AG04450 (cell line): ENCODE measurements at regions of chr7 and their contacts with region 1.

Region 1: DNA sequence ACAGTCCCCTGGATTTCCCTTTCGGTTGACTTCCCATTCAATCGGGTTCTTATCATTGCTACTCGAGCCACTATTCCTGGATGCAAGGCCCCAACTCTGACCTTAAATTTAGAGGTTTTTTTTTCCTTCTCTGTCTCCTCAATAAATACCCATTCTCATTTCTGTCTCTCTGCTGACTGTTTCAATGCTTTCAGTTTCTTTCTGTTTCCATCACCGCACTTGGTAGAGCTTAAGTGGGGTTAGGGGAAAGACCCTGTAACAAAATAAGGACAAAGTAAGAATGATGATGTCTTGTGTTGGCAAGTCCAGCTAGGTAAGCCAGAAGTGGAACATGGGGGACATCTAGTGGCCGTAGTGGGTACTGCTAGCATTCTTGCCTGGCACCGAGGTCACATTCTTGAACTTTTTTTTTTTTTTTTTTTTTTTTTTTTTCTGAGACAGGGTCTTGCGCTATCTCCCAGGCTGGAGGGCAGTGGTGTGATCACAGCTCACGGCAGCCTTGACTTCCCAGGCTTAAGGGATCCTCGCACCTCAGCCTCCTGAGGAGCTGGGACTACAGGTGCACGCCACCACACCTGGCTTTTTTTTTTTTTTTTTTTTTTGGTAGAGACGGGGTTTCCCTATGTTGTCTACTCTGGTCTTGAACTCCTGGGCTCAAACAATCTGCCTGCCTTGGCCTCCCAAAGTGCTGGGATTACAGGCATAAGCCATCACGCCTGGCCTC is 40.3 kb downstream of the ZC3HC1 start:
- DNase-seq: peak; percentile 80
- H3K4me3 ChIP-seq: no peak overlapping the region
- H3K27ac ChIP-seq: peak overlapping the region; percentile 88
- H3K27me3 ChIP-seq: no peaks in the 10 kb centered on the region
- CTCF ChIP-seq: peak; percentile 96

Region 2: GRCh38 chr7:129514683-129515082 is 496.2 kb before region 1 on chr7:
- CTCF ChIA-PET with region 1: no interaction called
- POLR2A ChIA-PET with region 1: no interaction called
- DNase-seq: no peak
- H3K4me3 ChIP-seq: no peak overlapping the region
- H3K27ac ChIP-seq: no peak overlapping the region
- H3K27me3 ChIP-seq: peaks cover 18% of the 10 kb centered on the region
- CTCF ChIP-seq: no peak

Region 3: DNA sequence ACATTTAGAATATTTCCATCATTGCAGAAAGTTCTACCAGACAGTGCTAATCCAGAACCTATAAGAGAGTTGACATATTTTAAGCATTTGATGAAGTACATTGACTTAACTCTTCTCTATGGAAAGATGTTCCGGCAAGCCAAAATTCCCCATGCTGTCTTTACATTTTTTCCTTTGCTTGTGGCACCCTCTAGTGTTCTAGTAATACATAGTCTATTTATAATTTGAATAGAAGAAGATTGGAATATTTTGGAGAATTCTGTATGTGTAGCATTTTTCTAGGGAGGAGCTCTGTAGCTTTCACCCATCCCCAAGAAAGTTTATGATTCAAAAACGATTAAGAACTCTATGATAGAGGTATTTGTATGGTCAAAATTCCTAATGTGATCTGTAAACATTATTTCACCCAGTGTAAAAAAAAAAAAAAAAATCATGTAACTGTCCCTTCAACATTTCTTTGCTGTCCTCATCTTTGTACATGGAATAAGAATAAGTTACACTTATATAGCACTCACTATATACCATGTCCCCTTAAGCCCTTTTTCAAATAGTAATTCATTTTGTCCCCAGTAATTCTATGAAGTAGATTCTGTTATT is 366.1 kb before region 1 on chr7:
- CTCF ChIA-PET with region 1: interaction called, 13 read pairs
- POLR2A ChIA-PET with region 1: no interaction called
- DNase-seq: peak; percentile 20
- H3K4me3 ChIP-seq: no peak overlapping the region
- H3K27ac ChIP-seq: no peak overlapping the region
- H3K27me3 ChIP-seq: no peaks in the 10 kb centered on the region
- CTCF ChIP-seq: peak; percentile 58

Region 4: DNA sequence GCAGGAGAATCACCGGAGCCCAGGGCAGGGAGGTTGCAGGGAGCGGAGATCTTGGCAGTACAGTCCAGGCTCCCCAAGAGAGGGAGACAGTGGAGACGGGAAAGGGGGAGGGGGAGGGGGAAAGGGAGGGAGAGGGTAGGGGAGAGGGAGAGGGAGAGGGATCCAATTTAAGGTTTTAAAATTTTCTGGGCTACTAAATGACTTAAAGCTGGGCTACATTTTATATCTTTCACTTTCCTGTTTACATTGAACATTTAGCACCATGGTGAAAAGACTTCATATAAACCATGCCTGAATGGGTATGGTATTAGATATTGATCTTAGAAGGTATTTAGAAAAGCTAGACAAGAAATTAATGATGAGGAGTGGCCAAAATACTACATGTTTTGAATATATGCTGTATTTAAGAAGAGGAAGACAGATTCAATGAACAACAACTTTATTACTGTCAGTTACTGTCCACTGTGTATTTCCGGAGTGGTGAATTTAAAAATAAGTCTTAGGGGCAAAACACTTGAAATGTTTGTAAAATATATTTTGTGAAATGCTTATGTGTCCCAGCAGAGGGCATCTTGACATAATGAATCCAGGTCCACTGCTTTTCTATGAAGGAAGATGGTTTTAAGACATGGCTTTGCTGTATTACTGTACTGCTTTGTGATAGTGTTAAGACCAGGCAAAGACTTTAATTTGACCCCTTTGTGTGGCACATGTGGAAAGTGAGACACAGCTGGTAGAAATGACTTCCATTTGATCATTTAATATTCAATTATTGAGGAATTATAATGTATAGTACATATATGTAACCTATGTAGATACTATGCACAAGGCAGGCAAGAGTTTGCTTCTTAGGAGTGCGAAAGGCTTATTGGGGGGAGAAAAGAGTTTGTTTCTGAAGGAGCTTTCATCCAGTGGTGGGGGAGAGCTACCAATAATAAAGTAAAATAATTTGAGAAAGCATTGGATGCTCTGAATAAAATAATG is 346.5 kb before region 1 on chr7:
- CTCF ChIA-PET with region 1: interaction called, 50 read pairs
- POLR2A ChIA-PET with region 1: no interaction called
- DNase-seq: peak; percentile 57
- H3K4me3 ChIP-seq: no peak overlapping the region
- H3K27ac ChIP-seq: no peak overlapping the region
- H3K27me3 ChIP-seq: no peaks in the 10 kb centered on the region
- CTCF ChIP-seq: peak; percentile 69

Region 5: GRCh38 chr7:129825496-129826267 is 185.2 kb before region 1 on chr7:
- CTCF ChIA-PET with region 1: interaction called, 37 read pairs
- POLR2A ChIA-PET with region 1: no interaction called
- DNase-seq: no peak
- H3K4me3 ChIP-seq: peak overlapping the region; percentile 73
- H3K27ac ChIP-seq: peak overlapping the region; percentile 39
- H3K27me3 ChIP-seq: no peaks in the 10 kb centered on the region
- CTCF ChIP-seq: peak; percentile 54

Region 6: GRCh38 chr7:129855234-129855673 is 155.6 kb before region 1 on chr7:
- CTCF ChIA-PET with region 1: interaction called, 5 read pairs
- POLR2A ChIA-PET with region 1: interaction called, 10 read pairs
- DNase-seq: peak; percentile 93
- H3K4me3 ChIP-seq: no peak overlapping the region
- H3K27ac ChIP-seq: peak overlapping the region; percentile 75
- H3K27me3 ChIP-seq: no peaks in the 10 kb centered on the region
- CTCF ChIP-seq: no peak

Region 7: GRCh38 chr7:129896568-129897382 is 114.1 kb before region 1 on chr7:
- CTCF ChIA-PET with region 1: no interaction called
- POLR2A ChIA-PET with region 1: no interaction called
- DNase-seq: no peak
- H3K4me3 ChIP-seq: no peak overlapping the region
- H3K27ac ChIP-seq: no peak overlapping the region
- H3K27me3 ChIP-seq: no peaks in the 10 kb centered on the region
- CTCF ChIP-seq: no peak

Region 8: GRCh38 chr7:129958643-129959470 is 52.0 kb before region 1 on chr7:
- CTCF ChIA-PET with region 1: interaction called, 13 read pairs
- POLR2A ChIA-PET with region 1: interaction called, 3 read pairs
- DNase-seq: peak; percentile 45
- H3K4me3 ChIP-seq: no peak overlapping the region
- H3K27ac ChIP-seq: peak overlapping the region; percentile 91
- H3K27me3 ChIP-seq: no peaks in the 10 kb centered on the region
- CTCF ChIP-seq: no peak

Region 9: DNA sequence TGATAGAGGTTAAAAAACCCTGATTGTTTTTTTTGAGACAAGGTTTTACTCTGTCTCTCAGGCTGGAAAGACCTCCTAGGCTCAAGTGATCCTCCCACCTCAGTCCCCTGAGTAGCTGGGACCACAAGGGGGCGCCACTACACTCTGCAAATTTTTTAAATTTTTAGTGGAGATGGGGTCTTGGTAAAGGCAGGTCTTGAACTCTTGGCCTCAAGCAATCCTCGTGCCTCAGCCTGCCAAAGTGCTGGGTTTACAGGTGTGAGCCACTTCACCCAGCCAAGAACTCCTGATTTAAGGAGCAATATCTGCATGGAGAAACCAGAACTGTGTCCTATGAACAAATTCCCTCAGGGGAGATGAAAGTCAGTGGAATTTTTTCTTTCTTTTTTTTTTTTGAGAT is 52.2 kb after region 1 on chr7:
- CTCF ChIA-PET with region 1: no interaction called
- POLR2A ChIA-PET with region 1: interaction called, 12 read pairs
- DNase-seq: no peak
- H3K4me3 ChIP-seq: no peak overlapping the region
- H3K27ac ChIP-seq: no peak overlapping the region
- H3K27me3 ChIP-seq: no peaks in the 10 kb centered on the region
- CTCF ChIP-seq: peak; percentile 76